Right ventricle myocardium inferior (tissue), 1 donor: ENCODE measurements at regions of chr18 and their contacts with region 1.

Region 1: GRCh38 chr18:31274915-31275314 is 43.0 kb upstream of the DSG1 start:
- DNase-seq: no peak
- ATAC-seq: no peak

Region 2: GRCh38 chr18:30987450-30988241 is 287.3 kb before region 1 on chr18:
- intact Hi-C with region 1: loop called (anchors 10 kb)
- DNase-seq: no peak
- ATAC-seq: no peak

Region 3: GRCh38 chr18:31399306-31400032 is 124.6 kb after region 1 on chr18:
- intact Hi-C with region 1: loop called (anchors 10 kb)
- DNase-seq: no peak
- ATAC-seq: no peak

Region 4: DNA sequence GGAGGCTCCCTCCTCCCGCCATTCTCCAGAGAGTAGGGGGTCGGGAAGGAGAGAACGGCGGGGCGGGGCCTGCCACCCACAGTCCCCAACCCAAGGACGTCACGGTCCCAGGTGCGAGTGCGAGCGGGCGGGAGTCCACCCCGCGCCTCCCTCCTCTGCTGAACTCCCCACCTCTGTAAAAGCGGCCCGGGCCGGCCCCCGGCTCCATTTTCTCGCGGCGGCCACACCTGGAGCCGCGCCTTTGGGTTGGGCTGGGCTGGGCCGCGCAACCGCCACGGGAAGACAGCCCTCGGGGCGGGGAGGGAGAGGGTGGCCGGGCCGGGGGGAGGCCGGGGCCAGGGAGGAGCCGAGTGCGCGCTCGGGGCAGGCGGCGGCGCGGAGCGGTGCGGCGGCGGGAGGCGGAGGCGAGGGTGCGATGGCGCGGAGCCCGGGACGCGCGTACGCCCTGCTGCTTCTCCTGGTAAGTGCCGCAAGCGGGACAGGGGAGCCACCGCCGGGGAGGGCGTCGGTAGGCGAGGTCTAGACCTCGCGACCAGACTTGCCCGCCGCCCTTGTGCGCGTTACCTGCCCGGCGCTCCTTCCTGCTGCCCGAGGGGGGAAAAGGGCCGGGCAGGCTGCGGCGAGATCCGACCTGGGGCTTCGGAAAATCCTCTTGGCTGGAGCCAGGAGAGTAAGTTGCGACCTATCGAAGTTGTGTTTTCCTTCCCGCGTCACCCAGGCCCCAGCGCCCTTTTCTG is 223.1 kb after region 1 on chr18 and contains the start of gene DSG2:
- intact Hi-C with region 1: loop called (anchors 5 kb)
- DNase-seq: peak; percentile 85
- ATAC-seq: peak; percentile 97
- total RNA-seq, gene DSG2: 35.7 TPM